ENCODE measurements at regions of chr3 and their contacts with region 1.

Region 1: DNA sequence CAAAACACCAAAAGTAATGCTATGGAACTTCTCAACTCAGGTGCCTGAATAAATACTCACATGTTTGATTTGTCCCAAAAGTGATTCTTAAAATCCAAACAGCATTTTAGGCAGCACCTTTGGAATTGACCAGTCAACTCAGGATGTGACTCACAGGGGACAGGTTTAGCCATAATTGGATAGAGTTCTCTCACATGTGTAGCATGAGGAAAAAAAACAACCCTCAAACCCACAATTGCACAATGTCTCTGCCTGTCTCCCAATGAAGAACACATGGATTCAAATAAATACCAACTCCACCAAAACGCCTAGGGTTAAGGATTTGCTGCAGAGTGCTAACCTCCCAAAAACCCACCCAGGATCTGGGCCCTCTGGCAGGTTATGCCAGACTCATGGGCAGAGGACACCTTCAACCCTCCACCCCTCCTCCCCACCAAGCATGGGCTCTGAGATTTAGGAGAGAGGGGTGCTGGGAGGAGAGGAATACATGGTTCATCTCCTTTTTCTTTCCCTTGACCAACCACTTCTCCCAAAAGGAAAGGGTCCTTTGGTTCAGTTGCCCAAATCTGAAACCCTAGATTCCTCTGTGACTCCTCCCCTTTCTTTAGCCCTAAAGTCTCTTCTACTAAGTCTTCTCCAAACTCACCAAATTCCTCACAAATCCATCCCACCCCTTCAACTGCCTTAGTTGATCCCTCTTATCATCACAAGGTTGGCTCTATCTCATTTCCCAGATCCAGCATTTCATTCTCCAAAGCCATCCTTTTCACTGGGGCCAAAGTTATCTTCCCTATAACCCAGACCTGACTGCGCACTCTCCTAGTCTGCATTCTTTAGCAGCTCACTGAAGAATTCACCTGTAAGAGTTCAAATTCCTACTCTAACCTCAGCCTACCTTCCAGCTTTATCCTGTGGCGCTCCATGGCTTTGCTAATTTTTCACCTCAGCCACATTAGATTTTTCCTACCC is 7.7 kb downstream of the RYK start:
- DNase-seq: peak; percentile 20
- ATAC-seq: peak; percentile 51
- H3K4me3 Mint-ChIP-seq: no peak overlapping the region
- H3K27ac Mint-ChIP-seq: no peak overlapping the region
- H3K4me1 Mint-ChIP-seq: peaks cover 88% of the 10 kb centered on the region
- H3K27me3 Mint-ChIP-seq: no peaks in the 10 kb centered on the region

Region 2: DNA sequence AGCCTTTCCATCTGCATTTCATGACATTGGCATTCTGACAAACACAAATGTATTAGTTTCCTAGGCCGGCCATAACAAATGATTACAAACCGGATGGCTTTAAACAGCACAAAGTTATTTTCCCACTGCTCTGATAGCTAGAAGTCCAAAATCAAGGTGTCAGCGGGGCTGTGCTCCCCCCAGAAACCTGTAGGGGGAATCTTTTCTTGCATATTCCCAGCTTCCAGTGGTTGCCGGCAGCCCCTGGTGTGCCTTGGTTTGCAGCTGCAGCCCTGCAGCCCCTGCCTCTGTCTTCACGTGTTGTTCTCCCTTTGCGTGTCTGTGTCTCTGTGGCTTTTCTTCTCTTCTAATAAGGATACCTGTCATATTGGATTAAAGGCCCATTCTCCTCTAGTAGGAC is 748.5 kb before region 1 on chr3:
- CTCF ChIA-PET with region 1: no interaction called
- POLR2A ChIA-PET with region 1: no interaction called
- intact Hi-C with region 1: loop called in 1 of 2 experiments (anchors 10 kb)
- DNase-seq: peak; percentile 36
- ATAC-seq: no peak
- H3K4me3 Mint-ChIP-seq: no peak overlapping the region
- H3K27ac Mint-ChIP-seq: no peak overlapping the region
- H3K4me1 Mint-ChIP-seq: peaks cover 45% of the 10 kb centered on the region
- H3K27me3 Mint-ChIP-seq: no peaks in the 10 kb centered on the region

Region 3: GRCh38 chr3:134087046-134087985 is 155.6 kb before region 1 on chr3:
- CTCF ChIA-PET with region 1: no interaction called
- POLR2A ChIA-PET with region 1: no interaction called
- intact Hi-C with region 1: no loop called
- DNase-seq: no peak
- ATAC-seq: no peak
- H3K4me3 Mint-ChIP-seq: no peak overlapping the region
- H3K27ac Mint-ChIP-seq: no peak overlapping the region
- H3K4me1 Mint-ChIP-seq: no peaks in the 10 kb centered on the region
- H3K27me3 Mint-ChIP-seq: no peaks in the 10 kb centered on the region

Region 4: DNA sequence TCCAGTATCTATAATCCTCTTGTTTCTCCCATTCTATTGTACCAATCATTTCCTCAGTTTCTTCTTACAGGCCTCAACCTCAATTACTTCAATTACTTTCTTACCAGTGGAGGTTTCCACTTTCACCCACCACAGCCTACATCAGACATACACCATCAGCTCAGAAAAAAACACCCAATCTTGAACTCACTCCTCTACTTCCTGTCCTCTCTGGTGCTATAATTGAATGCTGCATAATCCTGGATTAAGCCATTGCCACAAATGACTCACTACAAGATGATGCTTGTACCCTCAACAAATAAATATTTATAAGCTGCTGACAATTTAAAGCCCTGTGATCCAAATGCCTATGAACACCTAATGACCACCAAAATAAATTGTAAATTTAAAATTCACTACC is 10.8 kb before region 1 on chr3:
- CTCF ChIA-PET with region 1: interaction called, 31 read pairs
- POLR2A ChIA-PET with region 1: no interaction called
- intact Hi-C with region 1: no loop called
- DNase-seq: no peak
- ATAC-seq: peak; percentile 85
- H3K4me3 Mint-ChIP-seq: no peak overlapping the region
- H3K27ac Mint-ChIP-seq: peak overlapping the region; percentile 75
- H3K4me1 Mint-ChIP-seq: peaks cover 75% of the 10 kb centered on the region
- H3K27me3 Mint-ChIP-seq: no peaks in the 10 kb centered on the region

Region 5: GRCh38 chr3:134299185-134299887 is 56.4 kb after region 1 on chr3:
- CTCF ChIA-PET with region 1: interaction called, 4 read pairs
- POLR2A ChIA-PET with region 1: no interaction called
- intact Hi-C with region 1: loop called in 1 of 2 experiments (anchors 1 kb)
- DNase-seq: no peak
- ATAC-seq: no peak
- H3K4me3 Mint-ChIP-seq: no peak overlapping the region
- H3K27ac Mint-ChIP-seq: no peak overlapping the region
- H3K4me1 Mint-ChIP-seq: no peaks in the 10 kb centered on the region
- H3K27me3 Mint-ChIP-seq: peaks cover 32% of the 10 kb centered on the region

Region 6: DNA sequence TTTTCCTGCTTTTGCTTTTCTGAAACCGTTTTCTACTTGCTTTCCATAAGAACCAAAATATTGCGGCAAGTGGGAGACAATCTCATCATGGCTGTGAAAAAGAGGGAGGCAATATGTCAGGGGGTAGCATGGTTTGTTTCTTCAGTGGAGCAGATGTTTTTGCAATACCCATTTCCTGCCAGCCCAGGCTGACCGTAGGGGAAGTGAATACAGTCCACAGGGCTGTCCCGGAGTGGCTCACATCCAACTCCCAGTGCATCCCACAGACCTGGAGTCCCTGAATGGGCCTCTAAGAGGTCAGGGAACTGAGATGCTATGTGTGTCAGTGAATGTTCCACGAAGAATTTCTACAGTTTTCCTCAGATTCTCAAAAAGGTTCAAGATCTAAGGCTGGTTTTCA is 621.7 kb after region 1 on chr3:
- CTCF ChIA-PET with region 1: no interaction called
- POLR2A ChIA-PET with region 1: no interaction called
- intact Hi-C with region 1: no loop called
- DNase-seq: no peak
- ATAC-seq: no peak
- H3K4me3 Mint-ChIP-seq: no peak overlapping the region
- H3K27ac Mint-ChIP-seq: no peak overlapping the region
- H3K4me1 Mint-ChIP-seq: no peaks in the 10 kb centered on the region
- H3K27me3 Mint-ChIP-seq: no peaks in the 10 kb centered on the region

Region 7: DNA sequence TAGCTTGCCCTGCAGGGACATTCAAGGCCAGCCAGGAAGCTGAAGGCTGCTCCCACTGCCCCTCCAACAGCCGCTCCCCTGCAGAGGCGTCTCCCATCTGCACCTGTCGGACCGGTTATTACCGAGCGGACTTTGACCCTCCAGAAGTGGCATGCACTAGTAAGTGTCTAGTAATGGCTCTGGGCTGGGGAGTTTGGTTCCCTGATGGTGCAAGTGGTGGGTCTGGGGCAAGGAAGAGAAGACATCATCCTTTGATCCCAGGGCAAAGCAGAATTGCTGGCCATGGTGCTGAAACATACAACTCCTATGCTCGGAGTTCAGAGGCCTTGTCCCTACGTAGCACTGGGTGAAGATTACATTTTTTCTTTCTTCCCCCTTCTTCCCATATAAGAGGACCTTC is 863.5 kb after region 1 on chr3:
- CTCF ChIA-PET with region 1: no interaction called
- POLR2A ChIA-PET with region 1: no interaction called
- intact Hi-C with region 1: no loop called
- DNase-seq: peak; percentile 13
- ATAC-seq: no peak
- H3K4me3 Mint-ChIP-seq: no peak overlapping the region
- H3K27ac Mint-ChIP-seq: no peak overlapping the region
- H3K4me1 Mint-ChIP-seq: no peaks in the 10 kb centered on the region
- H3K27me3 Mint-ChIP-seq: peaks cover 4% of the 10 kb centered on the region

Measured in activated CD4-positive, alpha-beta T cell treated with anti-CD3 and anti-CD28 coated beads for 36 hours (primary cell).